GM10248 (cell line): ENCODE measurements at regions of chr4 and their contacts with region 1.

Region 1: DNA sequence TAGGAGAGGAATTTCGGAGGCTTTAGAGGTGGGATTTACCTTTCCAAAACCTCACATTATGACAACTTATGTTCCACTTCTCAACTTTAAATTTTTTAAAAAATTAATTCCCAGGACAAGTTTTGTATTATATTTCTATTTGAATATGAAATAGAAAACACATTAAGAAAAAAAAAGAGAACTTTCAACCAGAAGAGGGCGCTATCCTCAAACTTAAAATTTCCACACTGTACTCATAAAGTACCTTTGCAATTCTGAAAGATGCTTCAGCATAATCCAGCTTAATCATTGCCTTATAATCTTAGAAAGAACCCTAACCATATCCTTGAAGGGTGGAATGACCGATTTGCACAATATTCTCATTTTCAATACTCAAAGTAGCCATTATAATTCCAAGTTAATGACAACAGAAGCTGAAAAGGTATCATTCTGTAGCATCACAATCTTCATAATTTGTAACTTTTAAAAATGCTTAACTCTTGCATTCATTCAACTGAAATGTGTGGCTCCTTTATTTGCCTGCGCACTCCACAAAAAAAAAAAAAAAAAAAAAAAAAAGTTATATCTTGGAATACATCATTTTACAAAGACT is 158.0 kb downstream of the KCNIP4 start:
- DNase-seq: peak; percentile 6
- CTCF ChIP-seq: peak; percentile 22

Region 2: DNA sequence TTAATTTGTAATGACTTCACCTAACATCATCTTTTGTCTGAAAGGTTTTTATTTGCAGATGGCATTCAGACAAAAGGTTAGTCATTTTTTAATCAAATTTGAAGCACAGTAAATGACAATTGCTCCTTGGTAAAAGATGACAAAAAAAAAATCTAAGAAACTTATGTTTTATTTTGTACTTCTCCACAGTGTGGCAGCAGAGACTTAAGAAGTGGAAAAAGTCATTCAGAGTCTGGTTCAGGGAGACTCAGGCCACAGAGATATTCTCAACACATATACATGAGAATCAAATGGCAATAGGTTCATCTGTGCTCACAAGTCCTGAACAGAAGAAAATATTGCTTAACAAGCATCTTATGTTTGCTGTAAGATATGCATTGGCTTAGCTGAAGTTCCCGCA is 278.2 kb before region 1 on chr4:
- CTCF ChIA-PET with region 1: no interaction called
- POLR2A ChIA-PET with region 1: no interaction called
- DNase-seq: no peak
- CTCF ChIP-seq: peak; percentile 33

Region 3: GRCh38 chr4:21742326-21742725 is 48.2 kb before region 1 on chr4:
- CTCF ChIA-PET with region 1: no interaction called
- POLR2A ChIA-PET with region 1: no interaction called
- DNase-seq: no peak
- CTCF ChIP-seq: no peak

Region 4: DNA sequence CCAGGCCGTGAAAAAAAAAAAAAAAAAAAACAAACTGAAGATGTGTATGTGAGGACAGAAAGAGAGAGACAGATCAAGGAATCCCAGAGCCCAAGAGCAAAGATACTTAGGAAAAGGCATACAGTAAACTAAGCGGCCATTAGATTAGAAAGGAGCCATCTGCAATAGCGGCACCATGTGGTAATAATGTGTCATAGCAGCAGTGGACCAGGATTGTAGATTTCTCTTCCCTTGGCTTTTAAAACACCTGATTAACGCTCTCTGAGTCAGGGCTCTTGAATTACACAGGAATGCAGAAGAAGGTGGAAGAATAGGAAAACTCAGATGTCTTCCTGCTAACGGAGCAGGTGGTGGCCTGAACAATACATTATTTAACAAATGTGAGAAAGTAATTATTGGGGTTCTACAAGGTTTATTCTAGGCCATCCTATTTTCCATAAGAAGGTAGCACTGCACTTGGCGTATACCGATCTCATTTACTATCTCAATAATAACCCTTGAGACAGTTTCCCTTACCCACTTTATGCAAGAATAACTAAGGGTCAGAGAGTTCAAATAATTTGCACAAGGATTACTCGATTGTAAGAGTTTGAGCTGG is 24.6 kb before region 1 on chr4:
- CTCF ChIA-PET with region 1: interaction called, 19 read pairs
- POLR2A ChIA-PET with region 1: no interaction called
- DNase-seq: peak; percentile 18
- CTCF ChIP-seq: peak; percentile 91

Region 5: GRCh38 chr4:21780158-21780557 is 10.4 kb before region 1 on chr4:
- CTCF ChIA-PET with region 1: interaction called, 14 read pairs
- POLR2A ChIA-PET with region 1: no interaction called
- DNase-seq: no peak
- CTCF ChIP-seq: no peak

Region 6: GRCh38 chr4:21802406-21802805 is 11.9 kb after region 1 on chr4:
- CTCF ChIA-PET with region 1: interaction called, 13 read pairs
- POLR2A ChIA-PET with region 1: no interaction called
- DNase-seq: no peak
- CTCF ChIP-seq: no peak

Region 7: DNA sequence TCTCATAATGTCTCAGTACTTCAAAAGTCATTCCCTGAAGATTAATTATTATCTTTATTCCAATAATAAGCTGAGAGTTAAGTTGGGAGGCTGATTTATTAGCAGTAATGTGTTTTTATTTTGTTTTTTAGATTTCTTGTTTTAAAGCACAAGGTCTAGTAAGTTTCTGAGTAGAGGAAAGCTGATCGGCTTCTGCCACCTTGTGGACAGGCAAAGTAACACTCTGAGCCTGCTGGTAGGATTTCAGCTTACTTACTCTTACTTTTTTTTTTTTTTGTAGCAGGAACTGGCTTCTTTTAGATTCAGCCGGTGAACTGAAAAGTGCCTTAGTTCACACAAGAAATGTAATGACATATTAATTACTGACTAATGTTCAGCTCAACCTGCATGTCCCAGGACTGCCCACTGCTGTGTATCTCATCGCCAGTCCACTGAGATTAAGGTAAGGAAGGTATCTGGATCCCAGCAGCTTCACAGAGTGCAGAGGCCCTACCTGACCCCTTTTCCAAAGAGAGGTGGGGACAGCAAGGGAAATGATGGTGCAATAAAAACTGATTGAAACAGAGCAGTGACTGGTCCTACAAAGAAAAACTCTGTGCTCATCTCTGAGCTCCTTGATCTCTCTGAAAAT is 598.8 kb after region 1 on chr4:
- CTCF ChIA-PET with region 1: interaction called, 241 read pairs
- POLR2A ChIA-PET with region 1: interaction called, 3 read pairs
- DNase-seq: peak; percentile 26
- CTCF ChIP-seq: peak; percentile 74

Region 8: GRCh38 chr4:22688236-22688635 is 897.7 kb after region 1 on chr4:
- CTCF ChIA-PET with region 1: interaction called, 10 read pairs
- POLR2A ChIA-PET with region 1: no interaction called
- DNase-seq: no peak
- CTCF ChIP-seq: no peak